PC-3 (cell line): ENCODE measurements at regions of chr12 and their contacts with region 1.

Region 1: DNA sequence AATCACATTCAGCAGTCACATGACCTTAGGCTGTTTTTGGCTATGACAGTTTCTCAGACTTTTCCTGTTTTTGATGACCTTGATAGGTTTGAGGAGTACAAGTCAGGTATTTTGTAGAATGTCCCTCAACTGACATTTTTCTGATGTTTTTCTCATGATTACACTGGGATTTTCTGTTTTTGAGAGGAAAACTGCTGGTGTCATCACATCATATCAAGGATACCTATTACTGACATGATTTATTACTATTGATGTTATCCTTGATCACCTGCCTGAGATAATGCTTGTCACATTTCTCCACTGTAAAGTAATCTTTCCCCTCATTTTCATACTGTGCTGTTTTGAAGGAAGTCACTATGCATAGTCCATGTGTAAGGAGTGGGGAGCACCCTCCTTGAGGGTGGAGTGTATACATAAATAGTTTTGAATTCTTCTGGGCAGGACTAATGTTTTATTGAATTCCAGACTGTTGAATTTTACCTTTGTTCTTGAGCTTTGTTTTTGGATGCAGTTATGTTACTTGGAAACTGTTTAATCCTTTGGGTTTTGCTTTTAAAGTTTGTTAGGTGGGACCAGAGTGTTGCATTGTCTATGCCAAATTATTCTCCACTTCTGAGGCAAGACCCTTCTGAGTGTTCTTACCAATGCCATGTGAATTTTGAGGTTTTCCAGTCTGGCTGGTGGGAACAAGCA is 444.5 kb upstream of the FAR2 start:
- DNase-seq: peak; percentile 63
- ATAC-seq: peak; percentile 93
- H3K4me3 ChIP-seq: no peak overlapping the region
- H3K27ac ChIP-seq: no peak overlapping the region
- H3K4me1 ChIP-seq: peaks cover 9% of the 10 kb centered on the region
- H3K27me3 ChIP-seq: no peaks in the 10 kb centered on the region
- CTCF ChIP-seq: no peak

Region 2: DNA sequence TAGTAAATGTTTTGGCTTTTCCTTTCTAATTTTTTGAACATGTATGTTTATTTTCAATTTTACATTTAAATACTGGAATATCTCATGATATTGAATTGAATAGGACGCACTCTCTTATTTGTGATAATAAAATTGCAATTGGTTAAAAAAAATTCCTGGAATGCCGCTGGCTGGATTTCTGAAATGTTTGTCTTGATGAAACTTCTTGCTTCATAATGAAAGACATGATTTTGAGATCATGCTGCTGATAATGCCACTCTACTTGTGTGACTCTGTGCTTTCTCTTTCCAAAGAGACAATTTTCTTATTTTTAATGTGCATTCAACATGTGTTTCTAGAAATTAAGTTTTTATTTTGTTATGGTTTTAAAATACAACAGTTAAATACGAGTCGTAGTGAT is 21.3 kb before region 1 on chr12:
- CTCF ChIA-PET with region 1: no interaction called
- POLR2A ChIA-PET with region 1: no interaction called
- intact Hi-C with region 1: loop called (anchors 2 kb)
- DNase-seq: no peak
- ATAC-seq: no peak
- H3K4me3 ChIP-seq: no peak overlapping the region
- H3K27ac ChIP-seq: no peak overlapping the region
- H3K4me1 ChIP-seq: no peaks in the 10 kb centered on the region
- H3K27me3 ChIP-seq: no peaks in the 10 kb centered on the region
- CTCF ChIP-seq: no peak

Region 3: DNA sequence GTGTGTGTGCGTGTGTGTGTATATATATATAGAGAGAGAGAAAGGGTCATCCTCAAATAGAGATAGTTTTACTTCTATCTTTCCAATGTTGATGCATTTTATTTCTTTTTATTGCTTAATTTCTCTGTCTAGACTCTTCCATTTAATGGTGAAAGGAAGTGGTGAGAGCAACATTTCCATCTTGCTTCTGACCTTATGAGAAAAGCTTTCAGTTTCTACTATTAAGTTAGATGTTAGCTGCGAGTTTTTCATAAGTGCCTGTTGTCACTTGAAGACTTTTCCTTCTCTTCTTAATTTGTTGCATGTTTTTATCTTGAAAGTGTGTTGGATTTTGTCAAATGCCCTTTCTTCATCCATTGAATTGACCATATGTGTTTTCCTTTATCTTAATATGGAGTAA is 140.1 kb after region 1 on chr12:
- CTCF ChIA-PET with region 1: no interaction called
- POLR2A ChIA-PET with region 1: no interaction called
- intact Hi-C with region 1: no loop called
- DNase-seq: no peak
- ATAC-seq: no peak
- H3K4me3 ChIP-seq: no peak overlapping the region
- H3K27ac ChIP-seq: no peak overlapping the region
- H3K4me1 ChIP-seq: no peaks in the 10 kb centered on the region
- H3K27me3 ChIP-seq: no peaks in the 10 kb centered on the region
- CTCF ChIP-seq: no peak

Region 4: GRCh38 chr12:29207120-29207519 is 502.5 kb after region 1 on chr12:
- CTCF ChIA-PET with region 1: no interaction called
- POLR2A ChIA-PET with region 1: no interaction called
- intact Hi-C with region 1: no loop called
- DNase-seq: peak; percentile 24
- ATAC-seq: peak; percentile 40
- H3K4me3 ChIP-seq: no peak overlapping the region
- H3K27ac ChIP-seq: no peak overlapping the region
- H3K4me1 ChIP-seq: no peaks in the 10 kb centered on the region
- H3K27me3 ChIP-seq: no peaks in the 10 kb centered on the region
- CTCF ChIP-seq: peak; percentile 28; the same call in 1 of the 2 replicates